CD14-positive monocyte (primary cell): ENCODE measurements at regions of chrX and their contacts with region 1.

Region 1: GRCh38 chrX:2707334-2707760 is 16.3 kb downstream of the CD99 start:
- DNase-seq: peak; percentile 92 to 98 (median 96)
- H3K4me3 ChIP-seq: peak overlapping the region in 1 of 3 experiments; percentile 33
- H3K4me3 Mint-ChIP-seq: peak overlapping the region; percentile 64 to 76
- H3K27ac ChIP-seq: peak overlapping the region; percentile 78 to 87
- H3K27ac Mint-ChIP-seq: peak overlapping the region; percentile 96 to 99 (median 99)
- H3K4me1 ChIP-seq: peaks cover 49 to 50% of the 10 kb centered on the region in 2 donors
- H3K4me1 Mint-ChIP-seq: peaks cover 61% of the 10 kb centered on the region
- H3K27me3 ChIP-seq: no peaks in the 10 kb centered on the region
- H3K27me3 Mint-ChIP-seq: peaks cover 0 to 7% (median 2%) of the 10 kb centered on the region in 3 donors
- CTCF ChIP-seq: no peak

Region 2: DNA sequence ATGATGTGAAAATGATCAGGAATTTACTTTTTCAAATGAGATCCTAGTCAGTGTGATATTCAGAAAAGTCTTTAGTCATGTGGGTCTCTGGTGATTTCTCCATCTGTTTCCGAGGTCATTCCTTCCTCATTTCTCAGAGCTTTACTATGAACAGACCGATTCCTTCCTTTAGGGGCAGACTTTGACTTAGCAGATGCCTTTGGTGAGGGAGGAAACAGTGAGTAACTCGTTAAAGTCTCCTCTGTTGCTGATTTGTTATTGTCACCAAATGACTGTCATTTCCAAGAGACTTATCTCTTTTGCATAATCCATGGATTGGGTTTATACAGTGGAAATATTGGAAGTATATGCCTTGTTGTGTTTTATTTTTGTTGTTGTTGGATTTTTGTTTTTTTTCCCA is 92.4 kb before region 1 on chrX:
- intact Hi-C with region 1: loop called in 1 of 2 experiments (anchors 5 kb)
- DNase-seq: peak; percentile 80 to 92 (median 92)
- H3K4me3 ChIP-seq: peak overlapping the region in 1 of 3 experiments; percentile 21
- H3K4me3 Mint-ChIP-seq: peak overlapping the region; percentile 9 to 86
- H3K27ac ChIP-seq: peak overlapping the region; percentile 79 to 87
- H3K27ac Mint-ChIP-seq: peak overlapping the region; percentile 86 to 95 (median 89)
- H3K4me1 ChIP-seq: peaks cover 47 to 48% of the 10 kb centered on the region in 2 donors
- H3K4me1 Mint-ChIP-seq: peaks cover 50% of the 10 kb centered on the region
- H3K27me3 ChIP-seq: no peaks in the 10 kb centered on the region
- H3K27me3 Mint-ChIP-seq: peaks cover 0 to 5% (median 0%) of the 10 kb centered on the region in 3 donors
- CTCF ChIP-seq: peak; percentile 42

Region 3: GRCh38 chrX:2629316-2630007 is 77.9 kb before region 1 on chrX:
- intact Hi-C with region 1: loop called (anchors 5 kb)
- DNase-seq: peak; percentile 62 to 86 (median 76)
- H3K4me3 ChIP-seq: peak overlapping the region in 1 of 3 experiments; percentile 16
- H3K4me3 Mint-ChIP-seq: no peak overlapping the region
- H3K27ac ChIP-seq: peak overlapping the region in 1 of 2 donors; percentile 68
- H3K27ac Mint-ChIP-seq: peak overlapping the region; percentile 82 to 95 (median 90)
- H3K4me1 ChIP-seq: no peaks in the 10 kb centered on the region
- H3K4me1 Mint-ChIP-seq: peaks cover 6% of the 10 kb centered on the region
- H3K27me3 ChIP-seq: no peaks in the 10 kb centered on the region
- H3K27me3 Mint-ChIP-seq: peaks cover 0 to 28% (median 0%) of the 10 kb centered on the region in 3 donors
- CTCF ChIP-seq: no peak

Region 4: DNA sequence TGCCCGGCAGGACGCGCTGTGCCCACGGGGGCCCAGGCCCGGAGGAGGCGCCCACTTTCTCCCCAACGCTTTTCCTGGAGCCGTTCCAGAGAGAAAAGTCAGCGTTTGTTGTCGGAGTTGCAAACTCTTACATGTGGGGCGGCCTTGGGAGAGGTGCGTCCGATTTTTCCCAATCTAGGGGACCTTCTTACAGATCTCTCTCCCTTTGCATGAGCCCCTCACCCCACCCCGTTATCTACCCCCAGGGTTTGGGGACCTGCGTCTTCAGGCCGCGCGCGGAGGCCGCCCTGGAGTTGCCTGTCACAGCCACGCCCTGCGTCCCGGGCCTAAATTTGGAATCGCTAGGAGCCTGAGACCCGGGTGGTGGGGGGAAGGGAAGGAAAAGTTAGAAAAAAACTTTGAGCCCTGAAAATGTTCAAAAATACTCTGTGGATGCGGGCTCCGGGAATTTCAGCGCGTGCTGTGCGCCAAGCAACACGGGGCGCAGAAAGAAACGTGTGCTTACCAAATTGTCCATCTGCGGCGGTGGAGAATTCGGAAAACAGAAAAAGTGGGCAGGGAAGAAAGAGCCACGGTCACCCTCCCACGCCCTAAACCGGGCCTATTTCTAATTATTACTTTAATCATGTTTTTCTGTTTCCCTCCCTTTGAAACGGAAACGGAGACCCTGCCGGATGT is 15.7 kb before region 1 on chrX:
- intact Hi-C with region 1: loop called (anchors 2 kb)
- DNase-seq: peak in 1 of 3 donors; percentile 23
- H3K4me3 ChIP-seq: peak overlapping the region; percentile 73 to 90 (median 85)
- H3K4me3 Mint-ChIP-seq: peak overlapping the region; percentile 98
- H3K27ac ChIP-seq: peak overlapping the region; percentile 64 to 83
- H3K27ac Mint-ChIP-seq: peak overlapping the region; percentile 78 to 97 (median 91)
- H3K4me1 ChIP-seq: peaks cover 44 to 52% of the 10 kb centered on the region in 2 donors
- H3K4me1 Mint-ChIP-seq: peaks cover 46% of the 10 kb centered on the region
- H3K27me3 ChIP-seq: no peaks in the 10 kb centered on the region
- H3K27me3 Mint-ChIP-seq: peaks cover 8 to 22% (median 9%) of the 10 kb centered on the region in 3 donors
- CTCF ChIP-seq: no peak